Activated CD4-positive, alpha-beta T cell treated with anti-CD3 and anti-CD28 coated beads, Interleukin-2, amount 10 ng/mL, durations not matched to agents 24 days and 14 days (primary cell): ENCODE measurements at regions of chr5 and their contacts with region 1.

Region 1: GRCh38 chr5:112968411-112969106 is 8.0 kb upstream of the DCP2 start:
- DNase-seq: no peak
- H3K4me3 Mint-ChIP-seq: no peak overlapping the region
- H3K27ac Mint-ChIP-seq: no peak overlapping the region
- H3K4me1 Mint-ChIP-seq: peaks cover 17% of the 10 kb centered on the region
- H3K27me3 Mint-ChIP-seq: no peaks in the 10 kb centered on the region

Region 2: DNA sequence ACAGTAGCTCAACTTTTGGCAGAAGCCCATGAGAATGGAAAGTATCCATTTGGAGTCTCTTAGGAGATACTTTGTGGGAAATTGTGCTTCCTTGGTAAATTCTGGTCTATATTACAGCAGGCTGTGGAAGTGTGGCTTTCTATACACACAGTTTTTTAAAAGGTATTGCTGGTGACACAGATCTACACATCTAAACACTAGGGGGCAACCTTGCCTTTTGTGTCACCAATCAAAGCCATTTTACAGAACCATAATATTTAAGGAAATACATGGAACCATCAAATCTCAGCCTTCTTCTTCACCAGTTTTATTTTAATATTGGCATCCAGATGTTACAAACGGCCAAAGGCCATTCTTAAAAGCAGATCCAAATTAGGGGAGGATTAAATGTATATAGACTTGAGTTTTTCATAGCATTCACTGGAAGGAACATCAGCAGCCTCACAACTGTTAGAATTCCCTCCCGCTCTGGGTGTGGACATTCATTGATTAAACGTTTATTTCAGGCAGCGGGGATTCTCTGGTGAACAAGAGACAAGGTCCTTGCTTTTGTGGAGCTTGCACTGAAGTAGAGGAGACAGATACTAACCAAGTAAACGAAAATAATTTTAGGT is 417.0 kb before region 1 on chr5:
- intact Hi-C with region 1: loop called (anchors 1 kb)
- DNase-seq: peak; percentile 79
- H3K4me3 Mint-ChIP-seq: no peak overlapping the region
- H3K27ac Mint-ChIP-seq: no peak overlapping the region
- H3K4me1 Mint-ChIP-seq: peaks cover 2% of the 10 kb centered on the region
- H3K27me3 Mint-ChIP-seq: peaks cover 20% of the 10 kb centered on the region

Region 3: GRCh38 chr5:112860929-112861637 is 107.5 kb before region 1 on chr5 and contains the start of gene SRP19:
- intact Hi-C with region 1: loop called (anchors 1 kb)
- DNase-seq: peak; percentile 98
- H3K4me3 Mint-ChIP-seq: peak within 1 kb of the TSS; percentile 95
- H3K27ac Mint-ChIP-seq: peak within 1 kb of the TSS; percentile 94
- H3K4me1 Mint-ChIP-seq: peaks cover 18% of the 10 kb centered on the region
- H3K27me3 Mint-ChIP-seq: peaks cover 17% of the 10 kb centered on the region
- total RNA-seq, gene SRP19: 67.4 and 74.3 TPM in 2 replicates

Region 4: DNA sequence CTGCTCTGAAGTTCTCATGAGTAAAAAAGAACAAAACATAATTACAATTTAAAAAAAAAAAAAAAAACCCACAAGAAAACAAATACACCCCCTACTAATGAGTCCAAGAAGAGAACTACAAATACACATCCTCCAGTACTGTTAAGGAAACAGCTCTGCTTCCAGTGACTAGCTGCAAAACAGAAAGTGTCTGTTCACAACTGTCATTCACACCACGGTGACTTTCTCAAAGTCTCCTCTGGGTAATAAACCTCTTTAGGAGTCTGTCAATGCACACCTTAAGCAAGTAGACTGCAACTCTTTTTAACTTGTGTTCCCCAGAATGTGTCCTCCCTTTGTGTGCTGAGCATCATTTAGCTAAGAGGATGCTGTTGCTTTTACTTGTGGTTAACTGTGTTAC is 52.7 kb before region 1 on chr5:
- intact Hi-C with region 1: no loop called
- DNase-seq: peak; percentile 77
- H3K4me3 Mint-ChIP-seq: peak overlapping the region; percentile 64
- H3K27ac Mint-ChIP-seq: peak overlapping the region; percentile 75
- H3K4me1 Mint-ChIP-seq: peaks cover 65% of the 10 kb centered on the region
- H3K27me3 Mint-ChIP-seq: no peaks in the 10 kb centered on the region

Region 5: DNA sequence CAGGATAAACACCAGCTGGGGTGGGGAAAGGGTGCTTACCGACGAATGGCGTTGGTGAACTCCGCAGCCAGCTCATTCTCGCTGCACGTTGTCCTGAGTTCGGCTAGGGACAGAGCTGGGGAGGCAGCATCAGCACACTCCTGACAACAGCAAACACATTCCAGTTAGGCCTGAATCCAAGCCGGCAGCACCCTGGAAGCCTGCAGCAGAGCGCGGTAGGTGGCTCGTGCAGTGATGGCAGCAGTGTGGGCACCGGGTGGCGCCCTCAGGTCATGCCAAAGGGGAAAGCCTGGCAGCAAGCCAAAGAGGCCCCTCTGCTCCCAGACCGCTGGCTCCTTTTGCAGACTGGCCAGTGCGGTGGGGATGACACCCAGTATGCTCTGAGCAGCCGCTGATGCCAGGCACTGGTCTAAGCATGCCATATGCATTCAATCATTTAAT is 75.0 kb after region 1 on chr5:
- intact Hi-C with region 1: no loop called
- DNase-seq: no peak
- H3K4me3 Mint-ChIP-seq: no peak overlapping the region
- H3K27ac Mint-ChIP-seq: no peak overlapping the region
- H3K4me1 Mint-ChIP-seq: peaks cover 5% of the 10 kb centered on the region
- H3K27me3 Mint-ChIP-seq: peaks cover 2% of the 10 kb centered on the region